H1 (cell line): ENCODE measurements at regions of chr6 and their contacts with region 1.

Region 1: GRCh38 chr6:36360241-36361054 is 23.8 kb upstream of the BNIP5 start:
- DNase-seq: peak; percentile 7 to 82
- H3K4me3 ChIP-seq: no peak overlapping the region
- H3K27ac ChIP-seq: no peak overlapping the region
- H3K4me1 ChIP-seq: no peaks in the 10 kb centered on the region
- H3K27me3 ChIP-seq: peaks cover 0 to 1% (median 0%) of the 10 kb centered on the region in 4 experiments; a peak in 1 of 7 replicates
- CTCF ChIP-seq: peak; percentile 52 to 92 (median 88)
- EP300 ChIP-seq: no peak
- POLR2A ChIP-seq: no peak
- RAD21 ChIP-seq: peak; percentile 93 to 95

Region 2: DNA sequence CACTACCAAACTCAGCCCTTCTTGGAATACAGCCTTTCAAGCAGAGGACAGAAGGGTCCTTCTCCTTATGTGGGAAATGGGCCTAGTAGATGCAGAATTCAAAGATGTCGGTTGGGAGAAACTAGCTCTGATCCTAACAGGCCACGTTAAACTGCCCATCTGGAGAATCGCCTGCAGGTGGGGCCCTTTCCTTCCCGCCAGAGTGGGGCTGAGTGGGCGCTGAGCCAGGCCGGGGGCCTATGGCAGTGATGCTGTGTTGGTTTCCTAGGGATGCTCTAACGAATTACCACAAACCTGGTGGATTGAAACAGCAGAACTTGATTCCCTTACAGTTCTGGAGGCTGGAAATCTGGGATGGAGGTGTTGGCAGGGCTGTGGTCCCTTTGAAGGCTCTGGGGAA is 221.0 kb before region 1 on chr6:
- CTCF ChIA-PET with region 1: interaction called, 20 read pairs
- POLR2A ChIA-PET with region 1: interaction called, 4 read pairs
- DNase-seq: peak in 1 of 2 experiments; percentile 81
- H3K4me3 ChIP-seq: no peak overlapping the region
- H3K27ac ChIP-seq: no peak overlapping the region
- H3K4me1 ChIP-seq: peaks cover 0 to 6% (median 0%) of the 10 kb centered on the region in 4 experiments; a peak in 3 of 7 replicates
- H3K27me3 ChIP-seq: no peaks in the 10 kb centered on the region
- CTCF ChIP-seq: peak in 2 of 3 experiments; percentile 77 to 82; a peak in 3 of 4 replicates
- EP300 ChIP-seq: no peak
- POLR2A ChIP-seq: no peak
- RAD21 ChIP-seq: peak; percentile 83 to 89

Region 3: GRCh38 chr6:36302227-36302976 is 58.0 kb before region 1 on chr6:
- CTCF ChIA-PET with region 1: interaction called, 66 read pairs
- POLR2A ChIA-PET with region 1: no interaction called
- DNase-seq: peak; percentile 79 to 97
- H3K4me3 ChIP-seq: no peak overlapping the region
- H3K27ac ChIP-seq: no peak overlapping the region
- H3K4me1 ChIP-seq: peaks cover 0 to 5% (median 1%) of the 10 kb centered on the region in 4 experiments; a peak in 3 of 7 replicates
- H3K27me3 ChIP-seq: no peaks in the 10 kb centered on the region
- CTCF ChIP-seq: peak; percentile 79 to 99 (median 99)
- EP300 ChIP-seq: no peak
- POLR2A ChIP-seq: no peak
- RAD21 ChIP-seq: peak; percentile 69 to 80

Region 4: DNA sequence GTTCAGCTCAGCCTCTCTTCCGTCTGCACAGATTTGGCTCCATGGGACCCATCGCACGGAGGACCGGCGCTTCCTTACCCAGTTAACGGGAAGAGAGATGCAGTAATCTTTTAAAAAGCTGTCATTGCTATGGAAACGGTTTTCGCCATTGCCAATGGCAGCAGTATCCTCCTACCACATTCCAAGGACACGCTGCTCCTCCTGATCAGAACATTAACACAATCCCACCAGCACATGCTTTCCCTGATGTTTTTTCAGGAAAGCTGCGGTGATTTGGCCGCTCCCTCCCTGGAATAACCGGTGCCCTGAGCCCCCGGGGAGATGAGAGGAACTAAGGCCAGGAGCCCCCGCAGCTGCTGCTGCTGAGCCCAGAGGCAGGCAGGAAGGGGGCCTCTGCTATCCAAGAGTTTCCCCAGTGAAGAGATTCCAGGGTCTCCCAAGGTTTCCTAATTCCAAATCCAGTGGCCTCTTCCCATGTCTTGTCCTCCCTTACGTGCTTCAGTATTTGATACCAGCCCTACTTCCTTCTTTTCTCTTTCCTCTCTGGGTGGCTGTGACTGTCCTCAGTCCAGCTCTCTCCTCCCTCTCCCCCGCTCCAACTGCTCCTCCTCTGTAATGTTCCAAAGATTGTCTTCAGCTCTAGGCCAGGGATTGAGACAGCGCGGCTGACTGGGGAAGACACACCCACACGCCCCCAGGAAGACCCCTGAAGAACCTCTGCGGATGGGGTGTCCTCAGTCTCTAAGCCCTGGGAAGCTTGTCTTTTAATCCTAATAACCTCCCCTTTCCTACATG is 26.3 kb before region 1 on chr6:
- CTCF ChIA-PET with region 1: interaction called, 68 read pairs
- POLR2A ChIA-PET with region 1: no interaction called
- DNase-seq: no peak
- H3K4me3 ChIP-seq: no peak overlapping the region
- H3K27ac ChIP-seq: no peak overlapping the region
- H3K4me1 ChIP-seq: peaks cover 0 to 9% (median 3%) of the 10 kb centered on the region in 4 experiments; a peak in 4 of 7 replicates
- H3K27me3 ChIP-seq: peaks cover 0 to 3% (median 1%) of the 10 kb centered on the region in 4 experiments; a peak in 2 of 7 replicates
- CTCF ChIP-seq: no peak
- EP300 ChIP-seq: no peak
- POLR2A ChIP-seq: no peak
- RAD21 ChIP-seq: no peak

Region 5: DNA sequence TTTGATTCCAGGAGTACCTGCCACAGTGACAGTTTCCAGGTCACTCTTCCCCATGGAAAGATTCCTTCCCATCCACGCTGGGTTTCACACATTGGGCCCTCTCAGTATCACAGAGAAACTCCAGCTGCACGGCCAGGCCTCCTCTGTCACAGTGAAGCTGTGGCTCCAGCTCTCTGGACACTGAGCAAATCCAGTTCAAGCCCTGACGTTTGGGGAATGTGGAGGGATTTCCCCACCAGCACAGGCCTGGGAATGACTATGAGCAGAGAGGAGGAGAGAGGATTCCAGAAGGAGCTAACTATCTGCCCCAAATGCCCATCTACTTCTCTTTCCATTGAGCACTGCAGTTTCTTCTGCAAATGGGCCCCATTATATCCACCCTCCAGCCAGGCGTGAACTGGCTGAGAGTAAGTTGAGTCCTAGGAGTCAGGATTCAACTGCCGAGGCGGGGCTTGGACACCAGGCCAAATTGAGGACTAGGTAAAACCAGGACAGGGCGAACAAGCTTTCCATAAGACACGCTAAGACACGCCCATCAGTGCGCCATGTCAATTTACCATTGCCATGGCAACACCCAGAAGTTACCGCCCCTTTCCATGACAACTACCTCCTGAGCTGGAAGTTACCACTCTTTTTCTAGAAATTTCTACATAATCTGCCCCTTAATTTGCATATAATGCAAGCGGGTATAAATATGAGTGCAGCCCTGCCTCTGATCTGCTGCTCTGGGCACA is 14.6 kb before region 1 on chr6:
- CTCF ChIA-PET with region 1: interaction called, 68 read pairs
- POLR2A ChIA-PET with region 1: interaction called, 3 read pairs
- DNase-seq: peak in 1 of 2 experiments; percentile 57
- H3K4me3 ChIP-seq: no peak overlapping the region
- H3K27ac ChIP-seq: no peak overlapping the region
- H3K4me1 ChIP-seq: no peaks in the 10 kb centered on the region
- H3K27me3 ChIP-seq: no peaks in the 10 kb centered on the region; a peak in 2 of 7 replicates
- CTCF ChIP-seq: no peak
- EP300 ChIP-seq: no peak
- POLR2A ChIP-seq: no peak
- RAD21 ChIP-seq: no peak